A549 (cell line): ENCODE measurements at regions of chr1 and their contacts with region 1.

Region 1: DNA sequence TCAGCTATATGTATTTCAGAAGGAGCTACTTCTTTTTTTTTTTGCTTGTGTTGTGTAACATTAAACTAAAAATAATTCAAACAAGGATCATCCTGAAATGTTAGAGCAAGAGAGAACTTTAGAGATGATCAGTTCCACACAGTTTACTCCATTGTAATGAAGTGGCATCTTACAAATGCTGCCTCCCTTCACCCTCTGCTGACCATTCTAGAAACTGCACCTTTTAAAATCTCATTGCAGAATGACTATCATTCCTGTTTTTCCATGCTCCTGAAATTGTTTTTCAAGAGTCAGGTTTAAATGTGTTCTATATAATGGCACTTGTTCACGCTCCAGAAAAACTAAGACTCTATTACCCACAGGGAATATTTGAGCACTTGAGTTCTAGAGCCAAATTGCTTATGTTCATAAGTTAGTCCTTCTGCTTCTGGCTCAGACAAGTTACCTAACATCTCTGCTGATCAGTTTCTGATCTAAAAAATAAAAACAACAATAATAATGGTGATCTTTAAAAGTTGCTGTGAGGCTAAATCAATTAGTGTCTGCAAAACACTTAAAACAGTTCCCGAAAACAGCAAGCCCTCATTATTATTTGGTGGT is 21.5 kb upstream of the SLC44A5 start:
- DNase-seq: peak; percentile 4 to 22
- ATAC-seq: peak; percentile 66 to 73; a peak in 4 of 6 replicates
- H3K4me3 ChIP-seq: no peak overlapping the region
- H3K27ac ChIP-seq: no peak overlapping the region
- H3K4me1 ChIP-seq: no peaks in the 10 kb centered on the region
- CTCF ChIP-seq: peak; percentile 53
- EP300 ChIP-seq: no peak
- POLR2A ChIP-seq: no peak
- RAD21 ChIP-seq: peak; percentile 53 to 70; a peak in 4 of 5 replicates

Region 2: DNA sequence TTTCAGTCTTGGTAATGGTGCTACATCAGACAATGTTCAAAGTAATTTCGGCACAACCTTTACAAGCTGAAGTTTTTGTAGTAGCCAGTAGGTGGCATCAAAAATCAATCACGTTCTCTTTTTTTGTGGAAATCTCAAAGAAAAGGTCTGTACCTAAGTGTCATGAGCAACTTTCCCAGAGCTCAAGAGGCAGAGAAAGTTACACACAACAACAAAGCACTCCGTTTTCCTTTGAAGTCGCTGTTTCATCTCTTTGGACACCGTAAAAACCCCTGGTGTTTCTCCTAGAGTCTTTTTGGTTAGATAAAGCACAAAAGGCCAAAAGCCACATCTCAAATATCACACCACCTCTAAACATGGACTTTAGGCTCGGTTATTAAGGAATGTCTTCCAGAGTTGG is 366.7 kb before region 1 on chr1:
- CTCF ChIA-PET with region 1: interaction called, 12 read pairs
- POLR2A ChIA-PET with region 1: no interaction called
- DNase-seq: peak; percentile 1 to 33
- ATAC-seq: peak in 1 of 2 experiments; percentile 61; a peak in 2 of 6 replicates
- H3K4me3 ChIP-seq: no peak overlapping the region
- H3K27ac ChIP-seq: no peak overlapping the region
- H3K4me1 ChIP-seq: no peaks in the 10 kb centered on the region
- CTCF ChIP-seq: peak; percentile 57; the same call in 2 of the 3 replicates
- EP300 ChIP-seq: no peak
- POLR2A ChIP-seq: no peak
- RAD21 ChIP-seq: peak; percentile 48 to 53; a peak in 4 of 5 replicates